ENCODE measurements at regions of chr5 and their contacts with region 1.

Region 1: DNA sequence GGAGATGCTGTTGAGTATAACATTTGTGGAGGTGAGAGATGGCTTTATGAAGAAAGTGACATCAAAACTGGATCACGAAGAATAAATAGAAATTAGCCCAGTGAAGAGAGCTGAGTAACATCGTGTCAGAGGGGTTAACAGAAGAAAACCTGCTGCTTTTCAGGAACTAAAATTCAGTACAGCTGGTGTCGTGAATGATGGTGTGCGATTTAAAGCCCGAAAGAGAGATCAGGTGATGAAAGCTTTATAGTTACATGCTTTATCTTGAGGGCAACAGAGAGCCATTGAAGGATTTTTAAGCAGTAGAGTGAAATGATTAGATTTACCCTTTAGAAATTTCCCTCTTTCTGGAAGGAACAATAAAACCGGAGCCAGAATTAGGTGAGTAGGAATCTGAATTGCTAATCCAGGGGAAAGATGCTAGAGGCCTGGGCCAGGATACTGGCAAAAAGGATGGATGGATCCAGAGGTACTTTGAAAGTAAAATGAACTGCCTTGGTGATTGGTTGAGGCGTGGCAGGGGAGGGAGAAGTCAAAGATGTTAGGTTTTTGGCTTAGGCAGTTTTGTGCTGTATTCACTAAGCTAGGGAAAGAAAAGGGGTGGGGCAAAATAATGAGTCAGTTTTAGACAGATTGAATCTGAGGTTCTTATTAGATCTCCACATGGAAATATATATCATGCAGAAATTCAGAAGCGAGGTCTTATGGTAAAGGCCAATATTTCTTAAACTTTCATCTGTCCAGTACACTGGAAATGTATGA is 3.4 kb downstream of the LRRC70 start:
- DNase-seq: no peak
- H3K4me3 ChIP-seq: no peak overlapping the region
- H3K27ac ChIP-seq: no peak overlapping the region
- H3K4me1 ChIP-seq: no peaks in the 10 kb centered on the region
- H3K27me3 ChIP-seq: no peaks in the 10 kb centered on the region
- CTCF ChIP-seq: no peak
- POLR2A ChIP-seq: no peak

Region 2: GRCh38 chr5:61256474-61256873 is 1325.5 kb before region 1 on chr5:
- intact Hi-C with region 1: no loop called
- DNase-seq: no peak
- H3K4me3 ChIP-seq: no peak overlapping the region
- H3K27ac ChIP-seq: no peak overlapping the region
- H3K4me1 ChIP-seq: no peaks in the 10 kb centered on the region
- H3K27me3 ChIP-seq: no peaks in the 10 kb centered on the region
- CTCF ChIP-seq: no peak
- POLR2A ChIP-seq: no peak

Region 3: DNA sequence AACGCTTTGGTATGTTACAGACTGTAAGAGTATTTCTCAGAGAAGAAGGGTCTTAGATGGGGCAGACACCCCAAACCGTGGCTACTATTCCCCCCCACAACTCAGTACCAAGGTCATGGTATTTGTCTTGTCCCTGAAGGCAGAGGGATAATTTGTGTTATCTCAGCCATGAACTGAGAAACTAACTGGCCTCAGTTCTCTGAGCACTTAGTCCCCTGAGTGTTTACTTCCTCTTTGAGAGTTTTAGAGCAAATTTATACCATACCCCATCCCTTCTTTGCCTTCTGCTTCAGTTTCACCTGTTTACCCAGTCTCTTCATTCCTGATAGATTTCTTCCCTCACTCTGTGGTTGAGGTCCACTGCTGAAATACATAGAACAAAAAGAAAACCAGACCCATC is 180.5 kb after region 1 on chr5:
- intact Hi-C with region 1: no loop called
- DNase-seq: no peak
- H3K4me3 ChIP-seq: no peak overlapping the region
- H3K27ac ChIP-seq: no peak overlapping the region
- H3K4me1 ChIP-seq: no peaks in the 10 kb centered on the region
- H3K27me3 ChIP-seq: no peaks in the 10 kb centered on the region
- CTCF ChIP-seq: no peak
- POLR2A ChIP-seq: no peak

Region 4: GRCh38 chr5:63125862-63126261 is 543.8 kb after region 1 on chr5:
- intact Hi-C with region 1: loop called (anchors 5 kb)
- DNase-seq: no peak
- H3K4me3 ChIP-seq: no peak overlapping the region
- H3K27ac ChIP-seq: no peak overlapping the region
- H3K4me1 ChIP-seq: no peaks in the 10 kb centered on the region
- H3K27me3 ChIP-seq: no peaks in the 10 kb centered on the region
- CTCF ChIP-seq: peak in 1 of 3 donors; percentile 24
- POLR2A ChIP-seq: no peak

Measured in breast epithelium (tissue), 4 donors.